Activated CD4-positive, alpha-beta T cell treated with anti-CD3 and anti-CD28 coated beads, Interleukin-2, amount 10 ng/mL, durations not matched to agents 24 days and 14 days (primary cell): ENCODE measurements at regions of chr3 and their contacts with region 1.

Region 1: GRCh38 chr3:71130471-71131374 is 452.8 kb downstream of the FOXP1 start:
- DNase-seq: peak; percentile 93
- H3K4me3 Mint-ChIP-seq: peak overlapping the region; percentile 96
- H3K27ac Mint-ChIP-seq: peak overlapping the region; percentile 98
- H3K4me1 Mint-ChIP-seq: peaks cover 55% of the 10 kb centered on the region
- H3K27me3 Mint-ChIP-seq: no peaks in the 10 kb centered on the region

Region 2: GRCh38 chr3:71006810-71007785 is 123.6 kb before region 1 on chr3:
- intact Hi-C with region 1: loop called (anchors 1 kb)
- DNase-seq: no peak
- H3K4me3 Mint-ChIP-seq: no peak overlapping the region
- H3K27ac Mint-ChIP-seq: peak overlapping the region; percentile 12
- H3K4me1 Mint-ChIP-seq: peaks cover 54% of the 10 kb centered on the region
- H3K27me3 Mint-ChIP-seq: no peaks in the 10 kb centered on the region

Region 3: DNA sequence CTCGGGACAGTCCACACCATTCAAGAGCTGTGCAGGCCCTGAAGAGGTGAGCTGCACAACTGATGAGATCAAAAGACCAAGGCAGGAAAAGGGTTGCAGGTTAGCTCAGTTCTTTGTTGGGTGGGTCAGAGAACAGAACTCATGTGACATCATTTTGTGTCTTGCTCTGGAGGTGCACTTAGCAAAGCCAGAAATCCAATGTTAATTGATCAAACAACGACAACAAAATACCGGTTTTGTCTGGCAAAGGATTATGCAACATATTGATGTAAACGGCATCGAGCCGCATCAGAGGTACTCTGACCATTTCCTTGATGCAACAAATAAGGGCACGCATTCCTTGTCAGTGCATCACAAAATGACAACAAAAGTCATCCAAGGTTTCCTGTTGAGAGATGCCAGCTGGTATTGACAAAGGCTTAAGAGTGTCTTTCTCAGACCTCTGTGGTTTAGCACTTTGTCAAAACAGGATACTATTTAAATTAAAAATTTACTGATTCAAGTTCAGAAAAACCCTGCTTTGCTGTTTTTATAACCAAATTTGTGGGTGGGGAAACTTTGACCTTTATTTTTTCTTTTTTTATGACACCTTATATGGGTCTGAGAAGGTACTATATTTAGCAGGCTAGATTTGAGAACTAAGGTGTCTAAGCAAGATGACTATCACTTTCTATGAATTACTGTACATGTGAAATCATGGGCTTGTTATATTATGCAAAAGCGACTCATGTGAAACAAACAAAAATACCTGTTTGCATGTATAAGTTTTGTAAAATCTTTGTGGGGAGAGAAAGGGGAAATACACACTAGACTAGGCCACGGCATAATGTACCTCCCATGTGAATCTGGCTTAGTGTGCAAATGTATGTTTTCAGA is 43.3 kb before region 1 on chr3:
- intact Hi-C with region 1: loop called (anchors 1 kb)
- DNase-seq: peak; percentile 83
- H3K4me3 Mint-ChIP-seq: peak overlapping the region; percentile 62
- H3K27ac Mint-ChIP-seq: peak overlapping the region; percentile 91
- H3K4me1 Mint-ChIP-seq: peaks cover 70% of the 10 kb centered on the region
- H3K27me3 Mint-ChIP-seq: no peaks in the 10 kb centered on the region

Region 4: GRCh38 chr3:71185733-71186455 is 55.2 kb after region 1 on chr3:
- intact Hi-C with region 1: loop called (anchors 1 kb)
- DNase-seq: no peak
- H3K4me3 Mint-ChIP-seq: no peak overlapping the region
- H3K27ac Mint-ChIP-seq: no peak overlapping the region
- H3K4me1 Mint-ChIP-seq: peaks cover 26% of the 10 kb centered on the region
- H3K27me3 Mint-ChIP-seq: no peaks in the 10 kb centered on the region

Region 5: GRCh38 chr3:71360764-71361163 is 230.0 kb after region 1 on chr3:
- intact Hi-C with region 1: loop called (anchors 1 kb)
- DNase-seq: no peak
- H3K4me3 Mint-ChIP-seq: peak overlapping the region; percentile 23
- H3K27ac Mint-ChIP-seq: peak overlapping the region; percentile 89
- H3K4me1 Mint-ChIP-seq: peaks cover 25% of the 10 kb centered on the region
- H3K27me3 Mint-ChIP-seq: peaks cover 19% of the 10 kb centered on the region